ENCODE measurements at regions of chr13 and their contacts with region 1.

Region 1: GRCh38 chr13:111066544-111066943 is 48.6 kb upstream of the ARHGEF7 start:
- DNase-seq: no peak
- H3K4me3 Mint-ChIP-seq: peak overlapping the region; percentile 12
- H3K27ac Mint-ChIP-seq: no peak overlapping the region
- H3K4me1 Mint-ChIP-seq: peaks cover 10% of the 10 kb centered on the region
- H3K27me3 Mint-ChIP-seq: peaks cover 56% of the 10 kb centered on the region

Region 2: GRCh38 chr13:110915057-110915873 is 151.3 kb before region 1 on chr13 and contains the start of gene ANKRD10:
- CTCF ChIA-PET with region 1: interaction called, 17 read pairs
- POLR2A ChIA-PET with region 1: interaction called, 5 read pairs
- DNase-seq: peak; percentile 97
- H3K4me3 Mint-ChIP-seq: peak within 1 kb of the TSS; percentile 89
- H3K27ac Mint-ChIP-seq: peak within 1 kb of the TSS; percentile 94
- H3K4me1 Mint-ChIP-seq: peaks cover 48% of the 10 kb centered on the region
- H3K27me3 Mint-ChIP-seq: no peaks in the 10 kb centered on the region
- total RNA-seq, gene ANKRD10: 127 to 129 TPM

Region 3: GRCh38 chr13:111011899-111012298 is 54.6 kb before region 1 on chr13:
- CTCF ChIA-PET with region 1: interaction called, 26 read pairs
- POLR2A ChIA-PET with region 1: no interaction called
- DNase-seq: peak; percentile 68
- H3K4me3 Mint-ChIP-seq: peak overlapping the region; percentile 2
- H3K27ac Mint-ChIP-seq: peak overlapping the region; percentile 88
- H3K4me1 Mint-ChIP-seq: peaks cover 45% of the 10 kb centered on the region
- H3K27me3 Mint-ChIP-seq: peaks cover 32% of the 10 kb centered on the region

Region 4: DNA sequence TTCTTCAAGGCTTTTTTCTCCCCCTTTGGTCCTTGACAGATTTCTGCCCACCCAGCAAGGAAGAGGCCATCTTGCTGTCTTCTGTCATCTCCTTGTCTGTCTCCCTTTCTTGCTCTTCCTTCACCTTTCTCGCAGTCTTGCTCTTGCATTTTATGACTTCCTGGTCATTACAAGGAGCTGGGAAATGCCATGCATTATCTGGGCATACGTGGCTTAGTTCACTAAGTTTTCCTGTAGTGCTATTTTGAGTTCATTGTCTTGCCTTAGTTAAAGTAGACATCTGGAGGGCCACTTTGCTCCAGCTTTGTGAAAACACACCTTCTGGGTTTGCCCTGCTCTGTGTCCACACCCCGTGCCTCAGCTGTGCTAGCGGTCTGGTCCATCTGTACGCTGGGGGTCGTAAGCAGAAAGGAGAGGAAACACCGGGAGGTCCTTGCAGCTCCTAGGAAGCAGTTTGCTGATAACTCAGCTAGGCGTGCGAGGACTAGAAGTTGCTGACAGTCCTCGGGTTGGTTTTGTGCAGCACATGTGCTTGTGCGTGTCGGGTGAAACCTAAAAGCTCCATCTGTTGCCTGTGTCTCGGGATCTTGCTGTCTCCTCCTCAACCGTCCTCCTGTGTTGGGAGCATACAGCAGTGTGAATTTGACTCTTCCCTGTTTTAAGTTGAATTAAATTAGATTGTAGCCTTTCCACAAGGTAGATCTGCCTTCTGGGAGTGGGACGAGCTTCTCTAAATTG is 108.0 kb after region 1 on chr13:
- CTCF ChIA-PET with region 1: no interaction called
- POLR2A ChIA-PET with region 1: no interaction called
- DNase-seq: no peak
- H3K4me3 Mint-ChIP-seq: no peak overlapping the region
- H3K27ac Mint-ChIP-seq: no peak overlapping the region
- H3K4me1 Mint-ChIP-seq: peaks cover 55% of the 10 kb centered on the region
- H3K27me3 Mint-ChIP-seq: no peaks in the 10 kb centered on the region

Region 5: GRCh38 chr13:111225810-111226546 is 159.4 kb after region 1 on chr13:
- CTCF ChIA-PET with region 1: interaction called, 28 read pairs
- POLR2A ChIA-PET with region 1: no interaction called
- DNase-seq: no peak
- H3K4me3 Mint-ChIP-seq: no peak overlapping the region
- H3K27ac Mint-ChIP-seq: no peak overlapping the region
- H3K4me1 Mint-ChIP-seq: peaks cover 12% of the 10 kb centered on the region
- H3K27me3 Mint-ChIP-seq: no peaks in the 10 kb centered on the region

Region 6: DNA sequence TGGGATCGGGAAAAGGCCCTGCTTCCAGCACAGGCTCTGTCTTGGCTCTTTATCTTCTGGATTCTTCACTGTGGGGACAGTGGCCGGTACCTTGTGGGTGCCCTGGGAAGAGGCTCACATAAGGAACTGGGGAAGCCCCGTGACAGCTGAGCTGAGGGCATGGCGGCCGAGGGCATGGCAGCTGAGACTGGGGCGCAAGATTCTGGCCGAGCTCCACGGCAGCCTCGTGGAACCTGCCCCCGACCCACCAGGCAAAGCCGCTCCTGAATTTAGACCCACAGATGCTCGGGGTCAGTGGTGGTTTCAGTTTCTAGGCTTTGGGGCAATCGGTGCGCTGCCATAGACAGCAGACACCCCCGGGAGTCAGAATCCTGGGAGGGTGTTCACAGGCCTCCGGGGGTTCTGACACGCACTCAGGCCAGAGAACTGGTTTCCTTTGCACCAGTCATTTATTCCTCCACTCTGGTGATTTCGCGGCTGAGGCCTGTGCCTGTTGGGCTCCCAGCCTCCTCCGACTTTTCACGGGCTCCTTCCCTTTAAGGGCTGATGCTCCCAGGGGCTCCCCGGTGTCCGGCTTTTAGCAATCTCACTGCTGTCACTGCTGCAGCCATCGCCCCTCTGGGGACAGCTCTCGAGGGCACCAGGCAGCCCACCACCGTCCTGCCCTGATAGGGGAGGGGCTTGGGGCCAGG is 371.5 kb after region 1 on chr13:
- CTCF ChIA-PET with region 1: interaction called, 11 read pairs
- POLR2A ChIA-PET with region 1: no interaction called
- DNase-seq: no peak
- H3K4me3 Mint-ChIP-seq: no peak overlapping the region
- H3K27ac Mint-ChIP-seq: no peak overlapping the region
- H3K4me1 Mint-ChIP-seq: no peaks in the 10 kb centered on the region
- H3K27me3 Mint-ChIP-seq: peaks cover 3% of the 10 kb centered on the region

Measured in activated CD4-positive, alpha-beta memory T cell treated with anti-CD3 and anti-CD28 coated beads, Interleukin-2, amount 10 ng/mL, durations not matched to agents 7 days and 5 days (primary cell).